ENCODE measurements at regions of chr14 and their contacts with region 1.

Region 1: GRCh38 chr14:68548194-68549056 is 244.4 kb downstream of the ZFP36L1 start:
- DNase-seq: peak; percentile 87 to 94
- ATAC-seq: peak; percentile 87 to 95 (median 93)
- H3K4me3 ChIP-seq: no peak overlapping the region
- H3K27ac ChIP-seq: peak overlapping the region; percentile 91 to 97 (median 94)
- H3K4me1 ChIP-seq: peaks cover 28 to 85% (median 69%) of the 10 kb centered on the region in 9 donors
- H3K27me3 ChIP-seq: no peaks in the 10 kb centered on the region
- CTCF ChIP-seq: no peak

Region 2: DNA sequence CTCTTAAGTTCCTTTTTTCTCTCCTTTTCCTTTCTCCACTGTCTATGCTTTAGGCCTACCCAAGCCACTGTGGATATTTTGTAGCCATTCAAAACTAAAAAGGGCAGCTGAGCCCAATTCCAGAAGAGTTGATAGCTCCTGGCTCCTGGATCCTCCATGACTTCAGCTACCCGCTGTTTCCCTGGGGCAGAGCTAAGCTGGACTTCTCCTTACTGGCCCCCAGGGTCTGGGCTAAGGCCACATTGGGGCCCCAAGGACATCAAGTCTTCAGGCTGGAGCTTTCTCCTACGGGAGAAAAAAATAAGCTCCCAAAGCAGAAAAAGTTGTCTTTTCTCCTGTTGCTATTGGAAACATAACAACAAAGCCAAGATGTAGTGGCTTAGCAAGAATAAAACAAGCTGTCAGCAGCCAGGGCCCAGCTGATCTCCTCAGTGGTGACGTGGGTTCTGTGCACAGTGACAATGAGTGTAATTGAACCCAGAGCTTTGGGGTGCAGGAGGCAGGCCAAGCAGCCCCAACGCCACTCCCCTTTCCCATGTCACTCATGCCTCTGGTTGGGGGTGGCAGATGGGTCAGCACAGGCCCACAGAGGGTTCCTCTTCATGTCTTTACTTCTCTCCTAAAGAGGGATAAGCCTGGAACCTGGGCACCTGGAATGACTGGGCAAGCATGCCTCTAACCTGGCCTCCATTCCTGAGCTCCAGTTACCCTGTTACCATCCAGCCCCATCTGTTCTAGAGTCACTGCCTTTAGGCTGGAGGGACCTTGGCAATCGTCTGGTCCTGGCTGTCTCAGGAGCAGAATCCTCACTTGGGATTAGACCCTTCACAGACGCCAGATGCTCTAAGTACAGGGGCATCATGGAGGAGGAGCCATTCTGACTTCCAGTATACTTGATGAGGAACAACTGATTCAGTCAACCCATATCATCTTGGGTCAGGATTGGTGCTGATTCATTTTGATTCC is 73.3 kb after region 1 on chr14:
- intact Hi-C with region 1: loop called in 4 of 10 experiments (anchors 2 to 10 kb)
- DNase-seq: peak; percentile 58 to 76
- ATAC-seq: peak in 7 of 8 donors; percentile 54 to 85 (median 74)
- H3K4me3 ChIP-seq: no peak overlapping the region
- H3K27ac ChIP-seq: peak overlapping the region in 9 of 10 donors; percentile 49 to 92 (median 74)
- H3K4me1 ChIP-seq: peaks cover 9 to 45% (median 29%) of the 10 kb centered on the region in 9 donors
- H3K27me3 ChIP-seq: no peaks in the 10 kb centered on the region
- CTCF ChIP-seq: no peak

Region 3: DNA sequence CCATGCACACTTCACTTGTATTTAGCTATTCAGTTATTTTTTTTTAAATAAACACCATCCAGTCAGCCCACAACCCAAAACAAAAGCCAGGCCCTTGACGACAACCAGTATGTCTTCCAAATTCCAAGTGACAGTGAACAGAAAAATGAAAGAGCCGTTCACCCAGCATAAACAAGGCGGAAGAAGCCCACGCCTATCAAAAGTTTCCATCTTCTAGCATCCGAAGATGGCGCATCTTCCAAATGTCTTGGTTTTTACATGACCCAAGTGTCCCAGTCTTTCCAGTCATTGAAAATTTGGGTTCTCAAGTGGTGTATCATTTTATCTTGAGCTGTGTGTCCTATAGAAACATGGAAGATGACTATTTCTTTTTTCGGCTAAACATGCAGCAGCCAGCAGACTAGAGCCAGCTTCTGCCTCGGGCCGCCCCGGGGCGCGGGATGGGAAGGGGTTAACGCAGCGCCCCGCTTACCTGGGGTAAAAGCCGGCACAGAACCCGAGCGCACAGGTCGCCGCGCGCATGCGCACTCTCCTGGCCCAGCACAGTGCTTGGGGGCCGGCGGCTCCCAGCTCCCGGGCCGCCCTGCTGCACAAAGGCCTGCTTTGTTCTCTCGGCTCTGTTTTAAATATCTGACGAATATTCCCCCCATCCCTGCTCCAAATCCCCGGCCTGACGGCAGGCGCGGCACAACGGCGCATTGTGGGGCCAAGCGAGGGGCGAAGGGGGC is 79.6 kb after region 1 on chr14:
- intact Hi-C with region 1: loop called in 4 of 10 experiments (anchors 2 to 10 kb)
- DNase-seq: peak in 1 of 2 donors; percentile 71
- ATAC-seq: peak; percentile 15 to 52 (median 32)
- H3K4me3 ChIP-seq: peak overlapping the region in 7 of 10 donors; percentile 1 to 39 (median 34)
- H3K27ac ChIP-seq: peak overlapping the region in 8 of 10 donors; percentile 13 to 78 (median 37)
- H3K4me1 ChIP-seq: peaks cover 6 to 60% (median 42%) of the 10 kb centered on the region in 9 donors
- H3K27me3 ChIP-seq: no peaks in the 10 kb centered on the region
- CTCF ChIP-seq: no peak

Region 4: DNA sequence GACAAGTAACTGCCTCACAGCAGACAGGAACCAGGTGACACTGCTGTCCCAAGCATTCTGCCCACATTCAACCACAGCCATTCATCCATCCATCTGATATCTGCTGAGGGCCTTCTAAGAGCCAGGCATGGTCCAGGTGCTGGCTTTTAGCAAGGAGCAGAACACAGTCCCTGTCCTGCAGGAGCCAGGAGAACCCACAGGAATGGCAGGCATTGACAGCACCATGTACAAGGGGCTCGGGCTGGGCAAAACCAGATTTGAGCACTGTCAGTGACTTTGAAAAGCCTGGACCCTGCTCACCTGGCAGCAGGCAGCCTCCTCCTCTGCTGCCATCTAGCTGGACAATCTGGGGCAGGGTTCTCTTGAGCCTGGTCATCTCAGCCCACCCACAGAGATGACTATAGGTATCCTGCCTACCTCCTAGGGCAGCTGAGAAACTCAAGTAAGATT is 107.5 kb after region 1 on chr14:
- intact Hi-C with region 1: no loop called
- DNase-seq: no peak
- ATAC-seq: peak in 4 of 8 donors; percentile 17 to 30 (median 19)
- H3K4me3 ChIP-seq: no peak overlapping the region
- H3K27ac ChIP-seq: peak overlapping the region in 2 of 10 donors; percentile 10 to 15
- H3K4me1 ChIP-seq: peaks cover 19 to 55% (median 46%) of the 10 kb centered on the region in 9 donors
- H3K27me3 ChIP-seq: no peaks in the 10 kb centered on the region
- CTCF ChIP-seq: peak in 6 of 9 donors; percentile 20 to 48 (median 34)

Measured in heart right ventricle (tissue), 16 donors.